Activated B cell treated with CpG ODN at 0.5 μM for 24 hours (primary cell): ENCODE measurements at regions of chr9 and their contacts with region 1.

Region 1: DNA sequence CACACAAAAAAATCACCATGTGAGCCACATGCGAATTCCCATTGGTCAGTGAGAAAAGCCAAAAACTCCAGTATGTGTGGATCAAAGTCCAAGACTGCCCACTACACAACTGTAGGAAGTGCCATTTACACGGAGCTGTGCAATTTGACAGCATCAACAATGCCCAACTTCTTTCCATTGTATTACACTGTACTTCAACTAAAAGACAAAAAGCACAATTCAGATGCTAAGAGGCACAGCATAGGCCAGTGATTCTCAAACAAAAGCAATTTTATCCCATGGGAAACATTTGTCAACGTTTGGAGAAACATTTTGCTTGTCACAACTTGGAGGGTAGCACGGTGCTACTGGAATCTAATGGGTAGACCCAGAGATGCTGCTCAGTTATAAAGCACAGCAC is 39.8 kb downstream of the IARS1 start:
- DNase-seq: no peak
- ATAC-seq: no peak
- H3K4me3 Mint-ChIP-seq: no peak overlapping the region
- H3K27ac Mint-ChIP-seq: no peak overlapping the region
- H3K4me1 Mint-ChIP-seq: no peaks in the 10 kb centered on the region
- H3K27me3 Mint-ChIP-seq: no peaks in the 10 kb centered on the region
- CTCF ChIP-seq: no peak

Region 2: DNA sequence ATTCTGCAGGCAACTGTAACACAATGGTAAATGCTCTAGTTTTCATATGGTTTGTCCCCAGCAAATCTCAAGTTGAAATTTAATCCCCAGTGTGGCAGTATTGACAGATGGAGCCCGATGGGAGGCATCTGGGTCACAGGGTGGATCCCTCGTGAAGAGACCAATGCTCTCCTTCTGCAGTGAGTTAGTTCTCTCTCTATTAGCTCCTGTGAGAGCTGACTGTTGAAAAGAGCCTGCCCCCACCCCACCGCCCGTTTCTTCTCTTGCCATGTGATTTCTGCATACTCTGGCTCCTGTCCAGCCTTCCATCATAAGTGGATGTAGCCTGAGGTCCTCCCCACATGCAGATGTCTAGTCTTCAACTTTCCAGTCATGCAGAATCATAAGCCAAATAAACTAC is 12.8 kb after region 1 on chr9:
- CTCF ChIA-PET with region 1: no interaction called
- POLR2A ChIA-PET with region 1: no interaction called
- intact Hi-C with region 1: loop called (anchors 2 kb)
- DNase-seq: no peak
- ATAC-seq: no peak
- H3K4me3 Mint-ChIP-seq: no peak overlapping the region
- H3K27ac Mint-ChIP-seq: no peak overlapping the region
- H3K4me1 Mint-ChIP-seq: no peaks in the 10 kb centered on the region
- H3K27me3 Mint-ChIP-seq: no peaks in the 10 kb centered on the region
- CTCF ChIP-seq: no peak